Activated B cell treated with CpG ODN at 0.5 μM for 24 hours (primary cell): ENCODE measurements at regions of chr3 and their contacts with region 1.

Region 1: GRCh38 chr3:156705761-156706631 is 31.6 kb downstream of the TIPARP start:
- DNase-seq: no peak
- ATAC-seq: peak; percentile 65
- H3K4me3 Mint-ChIP-seq: no peak overlapping the region
- H3K27ac Mint-ChIP-seq: peak overlapping the region; percentile 46
- H3K4me1 Mint-ChIP-seq: peaks cover 24% of the 10 kb centered on the region
- H3K27me3 Mint-ChIP-seq: no peaks in the 10 kb centered on the region
- CTCF ChIP-seq: no peak

Region 2: GRCh38 chr3:156637488-156638059 is 68.4 kb before region 1 on chr3:
- CTCF ChIA-PET with region 1: no interaction called
- POLR2A ChIA-PET with region 1: no interaction called
- intact Hi-C with region 1: no loop called
- DNase-seq: no peak
- ATAC-seq: no peak
- H3K4me3 Mint-ChIP-seq: no peak overlapping the region
- H3K27ac Mint-ChIP-seq: no peak overlapping the region
- H3K4me1 Mint-ChIP-seq: no peaks in the 10 kb centered on the region
- H3K27me3 Mint-ChIP-seq: no peaks in the 10 kb centered on the region
- CTCF ChIP-seq: no peak

Region 3: GRCh38 chr3:156770699-156771414 is 64.9 kb after region 1 on chr3:
- CTCF ChIA-PET with region 1: no interaction called
- POLR2A ChIA-PET with region 1: interaction called, 12 read pairs
- intact Hi-C with region 1: no loop called
- DNase-seq: no peak
- ATAC-seq: no peak
- H3K4me3 Mint-ChIP-seq: no peak overlapping the region
- H3K27ac Mint-ChIP-seq: no peak overlapping the region
- H3K4me1 Mint-ChIP-seq: no peaks in the 10 kb centered on the region
- H3K27me3 Mint-ChIP-seq: no peaks in the 10 kb centered on the region
- CTCF ChIP-seq: no peak

Region 4: GRCh38 chr3:157460253-157460652 is 754.3 kb after region 1 on chr3:
- CTCF ChIA-PET with region 1: no interaction called
- POLR2A ChIA-PET with region 1: no interaction called
- intact Hi-C with region 1: no loop called
- DNase-seq: no peak
- ATAC-seq: no peak
- H3K4me3 Mint-ChIP-seq: no peak overlapping the region
- H3K27ac Mint-ChIP-seq: no peak overlapping the region
- H3K4me1 Mint-ChIP-seq: no peaks in the 10 kb centered on the region
- H3K27me3 Mint-ChIP-seq: peaks cover 11% of the 10 kb centered on the region
- CTCF ChIP-seq: no peak